CD8-positive, alpha-beta T cell (primary cell): ENCODE measurements at regions of chr1 and their contacts with region 1.

Region 1: DNA sequence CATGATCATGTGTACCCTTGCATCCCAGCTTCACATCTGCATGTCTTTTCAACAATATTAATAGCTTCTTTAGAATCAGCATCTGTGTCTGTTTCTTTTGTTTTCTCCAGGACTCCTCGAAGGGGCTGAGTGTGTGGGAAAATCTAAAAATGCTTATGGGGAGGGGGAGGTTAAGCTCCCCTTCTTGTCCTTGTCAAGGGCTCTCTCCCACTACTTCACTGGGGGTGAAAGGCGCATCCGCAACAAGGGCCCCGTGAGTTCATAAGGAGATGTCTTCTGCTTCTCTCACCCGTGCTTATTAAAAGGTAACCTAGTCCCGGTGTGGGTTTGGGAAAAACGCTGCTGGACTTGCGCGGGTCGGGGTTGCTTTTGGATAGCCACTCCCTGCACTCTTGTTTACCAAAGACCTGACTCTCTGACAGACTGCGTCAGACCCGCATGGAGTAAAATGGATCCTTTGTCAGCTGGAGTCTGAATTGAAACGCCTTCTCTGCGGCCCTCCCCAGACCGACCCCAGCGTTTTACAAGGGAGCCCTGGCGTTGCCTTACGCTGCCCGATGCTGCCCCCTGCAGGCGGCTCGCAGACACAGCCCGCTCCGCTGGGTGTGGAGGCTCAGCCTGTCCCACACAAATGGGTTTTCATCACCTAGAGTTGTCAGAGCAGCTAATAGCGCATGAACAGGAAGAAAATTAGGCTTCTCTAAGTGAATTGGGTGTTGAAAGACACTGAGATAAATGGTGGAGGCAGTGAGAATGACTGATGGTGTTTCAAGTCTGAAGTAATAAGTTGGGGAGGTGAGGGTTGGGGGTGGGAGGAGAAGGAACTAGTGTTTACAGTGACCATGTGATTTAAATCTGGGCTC is 53.8 kb downstream of the IER5 start:
- DNase-seq: peak; percentile 76 to 94 (median 88)
- ATAC-seq: peak; percentile 99
- H3K4me3 ChIP-seq: no peak overlapping the region
- H3K4me3 Mint-ChIP-seq: no peak overlapping the region
- H3K27ac ChIP-seq: no peak overlapping the region
- H3K27ac Mint-ChIP-seq: peak overlapping the region; percentile 19
- H3K4me1 ChIP-seq: peaks cover 17% of the 10 kb centered on the region
- H3K4me1 Mint-ChIP-seq: peaks cover 25% of the 10 kb centered on the region
- H3K27me3 ChIP-seq: no peaks in the 10 kb centered on the region
- H3K27me3 Mint-ChIP-seq: no peaks in the 10 kb centered on the region
- CTCF ChIP-seq: peak; percentile 98

Region 2: DNA sequence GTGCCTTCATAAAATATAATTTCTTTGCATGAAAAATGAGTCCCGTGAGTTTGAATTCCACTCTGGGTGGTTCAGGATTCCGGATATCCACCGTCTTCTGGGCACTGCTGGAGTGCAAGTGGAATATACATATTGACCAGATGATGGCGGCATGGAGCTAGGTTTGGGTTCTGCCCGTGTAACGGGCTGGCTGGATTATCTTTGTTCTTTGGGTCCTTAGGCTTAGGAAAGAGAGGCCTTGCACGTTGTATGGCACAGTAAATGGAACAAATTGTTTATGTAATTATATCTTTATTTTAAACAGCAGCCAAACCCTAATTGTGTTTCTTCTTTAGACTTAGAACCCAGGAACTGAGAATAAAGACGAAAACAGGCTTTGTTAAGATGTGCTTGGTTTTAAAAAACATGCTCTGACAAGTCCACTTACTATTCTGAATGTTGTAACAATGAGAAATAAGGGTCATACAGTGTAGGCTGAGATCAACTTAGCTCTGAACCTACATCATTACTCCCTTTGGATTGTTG is 626.4 kb before region 1 on chr1:
- CTCF ChIA-PET with region 1: interaction called, 9 read pairs
- POLR2A ChIA-PET with region 1: no interaction called
- intact Hi-C with region 1: loop called in 1 of 2 experiments (anchors 5 kb)
- DNase-seq: peak; percentile 10 to 76 (median 51)
- ATAC-seq: peak; percentile 95
- H3K4me3 ChIP-seq: no peak overlapping the region
- H3K4me3 Mint-ChIP-seq: no peak overlapping the region
- H3K27ac ChIP-seq: no peak overlapping the region
- H3K27ac Mint-ChIP-seq: no peak overlapping the region
- H3K4me1 ChIP-seq: no peaks in the 10 kb centered on the region
- H3K4me1 Mint-ChIP-seq: peaks cover 2% of the 10 kb centered on the region
- H3K27me3 ChIP-seq: no peaks in the 10 kb centered on the region
- H3K27me3 Mint-ChIP-seq: peaks cover 15% of the 10 kb centered on the region
- CTCF ChIP-seq: peak; percentile 93

Region 3: GRCh38 chr1:181033799-181034451 is 108.4 kb before region 1 on chr1 and contains the start of gene MR1:
- CTCF ChIA-PET with region 1: interaction called, 96 read pairs
- POLR2A ChIA-PET with region 1: interaction called, 3 read pairs
- intact Hi-C with region 1: loop called (anchors 1 kb)
- DNase-seq: peak in 7 of 9 experiments; percentile 16 to 93 (median 48)
- ATAC-seq: peak; percentile 97
- H3K4me3 ChIP-seq: peak within 1 kb of the TSS; percentile 66 to 76
- H3K4me3 Mint-ChIP-seq: peak within 1 kb of the TSS; percentile 96
- H3K27ac ChIP-seq: peak within 1 kb of the TSS; percentile 85 to 99
- H3K27ac Mint-ChIP-seq: peak within 1 kb of the TSS; percentile 99
- H3K4me1 ChIP-seq: peaks cover 39% of the 10 kb centered on the region
- H3K4me1 Mint-ChIP-seq: peaks cover 55% of the 10 kb centered on the region
- H3K27me3 ChIP-seq: no peaks in the 10 kb centered on the region
- H3K27me3 Mint-ChIP-seq: no peaks in the 10 kb centered on the region
- CTCF ChIP-seq: no peak
- total RNA-seq, gene MR1: 15.4 to 16.0 TPM

Region 4: DNA sequence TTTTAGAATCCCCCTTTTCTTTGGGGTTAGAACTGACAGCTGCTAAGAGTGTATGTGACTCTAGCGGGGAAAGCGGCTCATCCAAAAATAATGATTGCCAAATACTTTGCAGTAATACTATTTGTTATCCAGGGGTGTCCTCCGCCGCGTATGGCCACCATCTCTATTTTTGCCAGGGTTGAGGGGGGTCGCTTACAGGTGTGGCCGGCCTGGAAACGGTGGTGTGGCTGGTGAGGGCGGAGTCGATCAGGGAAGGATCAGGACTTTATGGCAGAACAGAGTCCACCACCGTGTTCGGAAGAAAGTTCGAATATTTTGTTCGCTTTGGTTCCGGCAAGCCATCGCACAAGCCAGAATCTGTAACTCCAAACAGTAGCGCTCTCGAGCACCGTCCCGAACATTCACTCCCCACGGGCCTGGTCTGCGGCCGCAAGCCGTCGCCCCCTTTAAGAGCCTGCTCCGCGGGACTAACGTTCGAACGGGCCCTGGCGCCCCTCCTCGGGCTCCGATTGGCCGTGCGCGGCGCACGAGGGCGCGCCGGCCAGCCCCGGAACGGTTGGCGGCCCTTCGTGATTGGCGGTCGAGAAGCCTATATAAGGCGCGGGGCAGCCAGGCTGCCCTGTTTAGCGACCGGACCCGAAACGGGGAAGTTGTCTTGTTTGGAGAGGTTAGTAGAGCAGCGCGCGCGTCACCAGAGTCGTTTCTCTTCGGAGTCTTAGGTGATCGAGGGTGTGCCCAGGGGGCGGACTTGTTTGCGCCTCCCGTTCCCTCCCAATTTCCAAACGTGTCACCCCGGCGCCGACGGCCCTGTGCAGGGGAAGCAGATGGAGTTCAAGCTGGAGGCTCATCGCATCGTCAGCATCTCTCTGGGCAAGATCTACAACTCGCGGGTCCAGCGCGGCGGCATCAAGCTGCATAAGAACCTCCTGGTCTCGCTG is 54.0 kb before region 1 on chr1 and contains the start of gene IER5:
- CTCF ChIA-PET with region 1: interaction called, 217 read pairs
- POLR2A ChIA-PET with region 1: interaction called, 25 read pairs
- intact Hi-C with region 1: loop called (anchors 1 kb)
- DNase-seq: peak; percentile 93 to 97 (median 95)
- ATAC-seq: peak; percentile 71
- H3K4me3 ChIP-seq: peak within 1 kb of the TSS; percentile 70 to 97
- H3K4me3 Mint-ChIP-seq: peak within 1 kb of the TSS; percentile 99
- H3K27ac ChIP-seq: peak within 1 kb of the TSS; percentile 89 to 99
- H3K27ac Mint-ChIP-seq: peak within 1 kb of the TSS; percentile 99
- H3K4me1 ChIP-seq: peaks cover 20% of the 10 kb centered on the region
- H3K4me1 Mint-ChIP-seq: peaks cover 44% of the 10 kb centered on the region
- H3K27me3 ChIP-seq: no peaks in the 10 kb centered on the region
- H3K27me3 Mint-ChIP-seq: no peaks in the 10 kb centered on the region
- CTCF ChIP-seq: no peak
- total RNA-seq, gene IER5: 74.7 to 76.6 TPM

Region 5: DNA sequence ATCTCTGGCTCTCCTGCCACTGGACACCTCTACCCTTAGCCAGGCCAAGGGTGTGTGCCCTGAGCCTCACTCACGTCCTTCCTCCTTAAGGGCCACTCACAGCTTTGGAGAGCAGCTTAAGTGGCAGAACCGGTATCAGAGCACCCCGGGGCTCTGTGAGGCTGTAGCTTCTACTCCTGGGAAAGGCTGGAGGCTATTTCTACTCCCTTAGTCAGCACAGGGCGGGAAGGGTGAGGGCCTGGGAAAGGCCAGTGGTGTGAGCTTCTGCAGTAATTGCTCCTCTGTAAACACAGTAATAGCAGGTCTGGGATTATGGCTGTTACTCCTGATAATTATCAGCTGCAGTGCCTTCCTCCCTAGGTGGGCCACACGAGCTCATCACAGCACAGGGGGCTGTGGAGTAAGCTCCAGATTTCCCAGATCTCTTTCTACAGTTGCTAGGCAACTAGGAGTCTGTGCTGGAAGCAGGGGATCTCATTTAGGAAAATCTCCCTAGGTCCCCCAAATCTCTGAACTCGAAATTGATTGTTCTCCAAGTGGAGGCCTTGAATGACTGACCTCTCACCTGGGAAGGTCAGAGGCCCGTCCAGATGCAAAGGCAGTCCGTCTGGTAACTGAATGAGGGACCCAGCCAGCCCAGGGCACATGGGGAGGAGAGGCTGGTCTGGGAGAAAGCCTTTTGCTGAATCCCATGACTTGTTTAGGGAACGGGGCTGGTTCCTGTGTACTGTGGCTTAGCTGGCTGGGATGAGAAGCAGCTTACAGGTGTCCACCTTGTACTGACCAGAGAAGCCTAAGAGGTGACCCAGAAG is 24.5 kb before region 1 on chr1:
- CTCF ChIA-PET with region 1: interaction called, 49 read pairs
- POLR2A ChIA-PET with region 1: no interaction called
- intact Hi-C with region 1: no loop called
- DNase-seq: no peak
- ATAC-seq: no peak
- H3K4me3 ChIP-seq: no peak overlapping the region
- H3K4me3 Mint-ChIP-seq: no peak overlapping the region
- H3K27ac ChIP-seq: no peak overlapping the region
- H3K27ac Mint-ChIP-seq: no peak overlapping the region
- H3K4me1 ChIP-seq: no peaks in the 10 kb centered on the region
- H3K4me1 Mint-ChIP-seq: no peaks in the 10 kb centered on the region
- H3K27me3 ChIP-seq: no peaks in the 10 kb centered on the region
- H3K27me3 Mint-ChIP-seq: no peaks in the 10 kb centered on the region
- CTCF ChIP-seq: no peak

Region 6: DNA sequence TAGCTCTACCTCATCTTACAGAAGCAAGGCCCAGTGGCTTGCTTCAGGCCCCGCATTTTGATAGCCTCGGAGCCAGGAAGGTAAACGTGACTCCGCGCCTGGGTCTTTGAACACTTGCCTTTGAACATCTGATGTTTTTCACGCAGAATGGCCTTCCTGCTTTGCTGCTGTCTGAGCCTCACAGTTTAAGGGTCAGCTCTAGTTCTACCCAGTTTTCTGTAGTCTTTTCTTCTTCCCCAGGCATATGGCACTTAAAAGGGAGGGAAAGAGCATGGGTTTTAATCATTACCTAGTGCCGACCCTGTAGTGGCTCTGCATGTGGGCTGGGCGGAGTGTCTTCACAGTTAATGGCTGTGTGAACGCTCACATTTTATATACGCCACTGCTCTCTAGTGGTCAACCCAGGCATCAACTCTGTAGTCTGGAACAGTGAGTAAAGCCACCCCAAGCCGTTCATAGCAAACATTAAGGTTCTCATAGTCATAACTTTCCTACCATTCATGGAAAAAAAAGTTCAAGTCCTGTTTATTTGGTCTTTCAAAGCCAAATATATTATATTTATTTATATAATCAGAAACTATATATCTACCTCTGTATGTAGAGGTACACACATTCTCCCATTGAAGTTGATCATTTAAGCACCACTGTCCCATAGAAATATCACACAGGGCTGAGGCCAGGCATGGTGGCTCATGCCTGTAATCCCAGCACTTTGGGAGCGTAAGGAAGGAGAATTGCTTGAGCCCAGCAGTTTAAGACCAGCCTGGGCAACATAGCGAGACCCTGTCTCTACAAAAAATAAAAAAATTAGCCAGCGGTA is 24.3 kb after region 1 on chr1:
- CTCF ChIA-PET with region 1: interaction called, 333 read pairs
- POLR2A ChIA-PET with region 1: interaction called, 6 read pairs
- intact Hi-C with region 1: loop called (anchors 1 kb)
- DNase-seq: peak; percentile 51 to 87 (median 75)
- ATAC-seq: peak; percentile 99
- H3K4me3 ChIP-seq: peak overlapping the region; percentile 6 to 28
- H3K4me3 Mint-ChIP-seq: peak overlapping the region; percentile 73
- H3K27ac ChIP-seq: no peak overlapping the region
- H3K27ac Mint-ChIP-seq: no peak overlapping the region
- H3K4me1 ChIP-seq: peaks cover 5% of the 10 kb centered on the region
- H3K4me1 Mint-ChIP-seq: peaks cover 7% of the 10 kb centered on the region
- H3K27me3 ChIP-seq: no peaks in the 10 kb centered on the region
- H3K27me3 Mint-ChIP-seq: no peaks in the 10 kb centered on the region
- CTCF ChIP-seq: peak; percentile 93